ENCODE measurements at regions of chr3 and their contacts with region 1.

Region 1: GRCh38 chr3:184543843-184544512 is 17.6 kb upstream of the EPHB3 start:
- DNase-seq: peak; percentile 82
- H3K4me3 Mint-ChIP-seq: no peak overlapping the region
- H3K27ac Mint-ChIP-seq: no peak overlapping the region
- H3K4me1 Mint-ChIP-seq: no peaks in the 10 kb centered on the region
- H3K27me3 Mint-ChIP-seq: peaks cover 70% of the 10 kb centered on the region
- CTCF ChIP-seq: peak; percentile 91

Region 2: DNA sequence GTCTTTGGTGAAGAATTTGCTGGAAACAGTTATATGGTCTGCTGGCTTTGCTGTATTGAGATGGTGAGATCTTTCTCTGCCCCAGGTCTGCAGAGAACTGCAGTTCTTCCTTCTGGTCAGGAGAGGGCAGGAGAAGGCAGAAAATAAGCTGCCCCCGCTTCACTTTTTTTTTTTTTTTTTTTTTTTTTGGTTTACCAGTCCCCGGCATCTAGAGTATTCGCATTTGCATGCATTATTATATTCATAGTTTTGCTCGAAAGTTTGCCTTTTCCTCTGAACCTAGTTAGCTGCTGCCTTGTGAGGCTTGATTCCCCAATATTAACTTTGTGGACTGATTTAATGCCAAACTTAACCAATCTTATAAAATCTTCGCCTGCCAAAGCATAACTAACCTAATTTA is 648.7 kb before region 1 on chr3:
- CTCF ChIA-PET with region 1: interaction called, 4 read pairs
- POLR2A ChIA-PET with region 1: no interaction called
- intact Hi-C with region 1: loop called (anchors 5 kb)
- DNase-seq: peak; percentile 60
- H3K4me3 Mint-ChIP-seq: no peak overlapping the region
- H3K27ac Mint-ChIP-seq: no peak overlapping the region
- H3K4me1 Mint-ChIP-seq: no peaks in the 10 kb centered on the region
- H3K27me3 Mint-ChIP-seq: no peaks in the 10 kb centered on the region
- CTCF ChIP-seq: peak; percentile 82

Region 3: DNA sequence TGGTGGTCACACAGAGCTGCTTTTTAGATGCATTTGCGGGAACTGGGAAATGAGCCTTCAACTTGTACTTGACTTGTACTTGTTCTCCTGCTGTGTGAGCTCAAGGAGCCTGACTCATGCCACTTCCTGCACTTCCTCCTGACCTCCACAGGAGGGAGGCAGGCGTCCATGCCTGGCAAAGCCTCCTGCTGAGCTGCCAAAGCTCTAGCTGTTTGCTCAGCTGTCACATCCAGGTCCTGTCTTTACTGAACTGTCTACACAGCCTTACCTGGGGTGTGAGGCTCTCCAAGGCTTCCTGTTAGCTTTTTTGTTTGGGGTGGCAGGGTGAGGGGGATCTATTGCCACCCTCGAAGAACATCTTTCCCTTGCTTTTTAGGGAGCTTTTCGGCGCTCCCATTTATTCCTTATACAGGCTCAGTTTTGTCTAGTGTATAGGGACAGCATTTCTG is 172.4 kb before region 1 on chr3:
- CTCF ChIA-PET with region 1: interaction called, 212 read pairs
- POLR2A ChIA-PET with region 1: interaction called, 13 read pairs
- intact Hi-C with region 1: loop called (anchors 1 kb)
- DNase-seq: peak; percentile 86
- H3K4me3 Mint-ChIP-seq: no peak overlapping the region
- H3K27ac Mint-ChIP-seq: no peak overlapping the region
- H3K4me1 Mint-ChIP-seq: peaks cover 11% of the 10 kb centered on the region
- H3K27me3 Mint-ChIP-seq: peaks cover 23% of the 10 kb centered on the region
- CTCF ChIP-seq: peak; percentile 94

Region 4: DNA sequence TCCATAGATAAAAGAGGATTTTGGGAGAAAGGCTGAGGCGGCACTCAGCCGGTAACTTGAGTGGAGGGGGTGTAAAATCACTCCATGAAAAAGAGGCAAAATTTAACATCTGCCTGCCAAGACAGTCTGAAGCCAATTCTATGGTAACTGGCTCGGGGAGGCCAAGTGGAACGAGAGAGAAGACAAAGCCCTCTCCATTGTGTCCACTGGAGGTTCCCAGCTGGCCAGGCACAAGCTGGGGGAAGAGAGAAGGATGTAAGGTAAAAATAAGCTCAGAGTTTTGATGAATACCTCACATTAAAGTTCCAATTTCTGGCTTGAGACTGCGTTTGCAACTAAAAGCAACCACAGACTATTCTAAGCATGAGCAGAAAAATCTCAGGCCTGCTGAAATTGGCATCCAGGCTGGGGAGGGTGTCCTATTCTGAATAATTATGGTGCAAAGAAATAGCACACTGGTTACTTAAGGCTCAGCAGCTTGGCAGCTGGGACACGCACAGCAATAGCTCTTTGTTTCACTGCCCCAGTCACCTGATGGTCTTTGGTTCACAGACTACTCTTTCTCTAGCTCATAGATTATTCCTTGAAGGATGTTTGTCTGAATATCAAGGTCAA is 115.3 kb before region 1 on chr3:
- CTCF ChIA-PET with region 1: interaction called, 14 read pairs
- POLR2A ChIA-PET with region 1: no interaction called
- intact Hi-C with region 1: no loop called
- DNase-seq: no peak
- H3K4me3 Mint-ChIP-seq: no peak overlapping the region
- H3K27ac Mint-ChIP-seq: no peak overlapping the region
- H3K4me1 Mint-ChIP-seq: peaks cover 10% of the 10 kb centered on the region
- H3K27me3 Mint-ChIP-seq: peaks cover 5% of the 10 kb centered on the region
- CTCF ChIP-seq: no peak

Region 5: GRCh38 chr3:184523825-184524615 is 20.0 kb before region 1 on chr3:
- CTCF ChIA-PET with region 1: interaction called, 18 read pairs
- POLR2A ChIA-PET with region 1: interaction called, 3 read pairs
- intact Hi-C with region 1: no loop called
- DNase-seq: peak; percentile 69
- H3K4me3 Mint-ChIP-seq: no peak overlapping the region
- H3K27ac Mint-ChIP-seq: no peak overlapping the region
- H3K4me1 Mint-ChIP-seq: peaks cover 14% of the 10 kb centered on the region
- H3K27me3 Mint-ChIP-seq: peaks cover 13% of the 10 kb centered on the region
- CTCF ChIP-seq: no peak

Measured in MCF 10A (cell line).